ENCODE measurements at regions of chr5 and their contacts with region 1.

Region 1: DNA sequence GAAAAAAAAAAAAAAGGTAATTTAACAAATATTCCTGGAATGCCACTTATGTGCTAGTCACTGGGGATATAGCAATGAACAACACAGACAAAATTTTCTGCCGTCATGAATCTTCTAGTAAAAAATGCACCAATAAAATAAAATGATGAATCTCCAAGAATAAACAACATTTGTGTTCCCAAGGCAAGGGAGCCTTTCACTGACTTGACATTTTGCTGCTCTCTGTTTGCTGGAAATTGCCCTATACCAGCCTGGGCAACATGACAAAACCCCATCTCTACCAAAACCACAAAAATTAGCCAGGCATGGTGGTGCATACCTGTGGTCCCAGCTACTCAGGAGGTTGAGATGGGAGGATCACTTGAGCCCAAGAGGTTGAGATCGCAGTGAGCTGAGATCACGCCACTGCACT is 64.5 kb upstream of the ERBIN start:
- DNase-seq: peak; percentile 81
- ATAC-seq: peak; percentile 90
- H3K4me3 ChIP-seq: no peak overlapping the region
- H3K27ac ChIP-seq: peak overlapping the region; percentile 97
- H3K4me1 ChIP-seq: peaks cover 40% of the 10 kb centered on the region
- H3K27me3 ChIP-seq: no peaks in the 10 kb centered on the region
- CTCF ChIP-seq: no peak

Region 2: GRCh38 chr5:65682148-65682547 is 179.7 kb before region 1 on chr5:
- CTCF ChIA-PET with region 1: no interaction called
- POLR2A ChIA-PET with region 1: no interaction called
- intact Hi-C with region 1: no loop called
- DNase-seq: no peak
- ATAC-seq: no peak
- H3K4me3 ChIP-seq: no peak overlapping the region
- H3K27ac ChIP-seq: no peak overlapping the region
- H3K4me1 ChIP-seq: no peaks in the 10 kb centered on the region
- H3K27me3 ChIP-seq: no peaks in the 10 kb centered on the region
- CTCF ChIP-seq: no peak

Region 3: GRCh38 chr5:65809817-65810531 is 51.9 kb before region 1 on chr5:
- CTCF ChIA-PET with region 1: no interaction called
- POLR2A ChIA-PET with region 1: interaction called, 3 read pairs
- intact Hi-C with region 1: loop called (anchors 1 kb)
- DNase-seq: peak; percentile 71
- ATAC-seq: peak; percentile 82
- H3K4me3 ChIP-seq: no peak overlapping the region
- H3K27ac ChIP-seq: peak overlapping the region; percentile 97
- H3K4me1 ChIP-seq: peaks cover 42% of the 10 kb centered on the region
- H3K27me3 ChIP-seq: no peaks in the 10 kb centered on the region
- CTCF ChIP-seq: no peak

Region 4: DNA sequence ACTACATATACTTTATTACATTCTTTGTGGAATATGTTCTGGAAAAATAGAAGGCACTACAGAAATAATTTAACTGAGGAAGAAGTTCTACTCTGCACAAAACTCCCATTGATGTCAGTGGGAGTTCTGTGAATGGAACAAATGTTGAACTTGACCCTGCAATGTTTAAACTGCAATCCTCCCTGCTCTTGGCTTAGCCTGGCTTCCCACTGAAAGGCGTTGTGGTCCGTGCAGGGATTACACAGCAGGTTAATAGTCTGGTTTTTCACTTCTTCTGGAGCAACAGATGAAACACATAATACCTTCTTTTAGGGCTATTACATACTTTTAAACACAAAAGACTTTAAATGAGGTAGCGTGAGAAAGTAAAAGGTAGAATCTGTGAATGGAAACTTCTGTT is 51.7 kb after region 1 on chr5:
- CTCF ChIA-PET with region 1: interaction called, 10 read pairs
- POLR2A ChIA-PET with region 1: no interaction called
- intact Hi-C with region 1: no loop called
- DNase-seq: no peak
- ATAC-seq: no peak
- H3K4me3 ChIP-seq: no peak overlapping the region
- H3K27ac ChIP-seq: no peak overlapping the region
- H3K4me1 ChIP-seq: no peaks in the 10 kb centered on the region
- H3K27me3 ChIP-seq: no peaks in the 10 kb centered on the region
- CTCF ChIP-seq: no peak